ENCODE measurements at regions of chr5 and their contacts with region 1.

Region 1: DNA sequence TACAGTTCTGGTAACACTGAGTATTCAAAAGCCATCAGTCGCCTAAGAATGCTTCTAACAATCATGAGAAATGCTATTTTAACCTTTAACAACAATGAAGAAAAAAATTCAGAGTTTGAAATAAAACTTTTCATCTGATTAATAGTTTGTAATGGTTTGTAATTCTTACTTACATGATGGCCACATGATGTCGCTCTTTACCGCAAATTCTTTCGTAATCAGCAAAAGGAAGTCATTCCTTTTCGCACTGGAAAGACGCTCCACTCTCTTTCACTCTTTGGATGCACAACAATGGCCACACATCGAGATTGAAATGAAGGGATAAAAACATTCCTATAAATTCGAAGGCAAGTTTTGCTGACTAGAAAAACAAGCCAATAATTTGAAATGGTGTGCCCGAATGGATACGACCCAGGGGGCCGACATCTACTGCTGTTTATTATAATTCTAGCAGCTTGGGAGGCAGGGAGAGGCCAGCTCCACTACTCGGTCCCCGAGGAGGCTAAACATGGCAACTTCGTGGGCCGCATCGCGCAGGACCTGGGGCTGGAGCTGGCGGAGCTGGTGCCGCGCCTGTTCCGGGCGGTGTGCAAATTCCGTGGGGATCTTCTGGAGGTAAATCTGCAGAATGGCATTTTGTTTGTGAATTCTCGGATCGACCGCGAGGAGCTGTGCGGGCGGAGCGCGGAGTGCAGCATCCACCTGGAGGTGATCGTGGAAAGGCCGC is at the start of gene PCDHA7:
- DNase-seq: no peak
- H3K4me3 Mint-ChIP-seq: no peak within 1 kb of the TSS
- H3K27ac Mint-ChIP-seq: no peak within 1 kb of the TSS
- H3K4me1 Mint-ChIP-seq: no peaks in the 10 kb centered on the region
- H3K27me3 Mint-ChIP-seq: no peaks in the 10 kb centered on the region
- total RNA-seq, gene PCDHA7: not detected in 2 replicates

Region 2: GRCh38 chr5:140875066-140876065 is 41.2 kb after region 1 on chr5 and contains the start of gene PCDHA12:
- intact Hi-C with region 1: loop called (anchors 5 kb)
- DNase-seq: no peak
- H3K4me3 Mint-ChIP-seq: no peak within 1 kb of the TSS
- H3K27ac Mint-ChIP-seq: no peak within 1 kb of the TSS
- H3K4me1 Mint-ChIP-seq: no peaks in the 10 kb centered on the region
- H3K27me3 Mint-ChIP-seq: no peaks in the 10 kb centered on the region
- total RNA-seq, gene PCDHA12: not detected in 2 replicates

Region 3: GRCh38 chr5:140996060-140996459 is 161.9 kb after region 1 on chr5:
- intact Hi-C with region 1: no loop called
- DNase-seq: no peak
- H3K4me3 Mint-ChIP-seq: no peak overlapping the region
- H3K27ac Mint-ChIP-seq: no peak overlapping the region
- H3K4me1 Mint-ChIP-seq: no peaks in the 10 kb centered on the region
- H3K27me3 Mint-ChIP-seq: no peaks in the 10 kb centered on the region

Region 4: GRCh38 chr5:141326088-141326854 is 492.1 kb after region 1 on chr5:
- intact Hi-C with region 1: no loop called
- DNase-seq: peak; percentile 59
- H3K4me3 Mint-ChIP-seq: peak overlapping the region; percentile 98
- H3K27ac Mint-ChIP-seq: peak overlapping the region; percentile 83
- H3K4me1 Mint-ChIP-seq: peaks cover 16% of the 10 kb centered on the region
- H3K27me3 Mint-ChIP-seq: peaks cover 12% of the 10 kb centered on the region

Measured in activated T-helper 1 cell treated with anti-CD3 and anti-CD28 coated beads, Interleukin-12 subunit alpha, Interleukin-12 subunit beta, Interleukin-2, Interleukin-4 antibody, amounts not matched to agents 30 ng/mL and 10 ng/mL and 1 ng/mL, durations not matched to agents 14 hours and 24 hours and 36 hours (primary cell).